ENCODE measurements at regions of chr3 and their contacts with region 1.

Region 1: GRCh38 chr3:58217209-58217811 is 6.5 kb upstream of the DNASE1L3 start:
- DNase-seq: peak; percentile 41
- H3K4me3 Mint-ChIP-seq: no peak overlapping the region
- H3K27ac Mint-ChIP-seq: peak overlapping the region; percentile 46
- H3K4me1 Mint-ChIP-seq: peaks cover 37% of the 10 kb centered on the region
- H3K27me3 Mint-ChIP-seq: peaks cover 11% of the 10 kb centered on the region

Region 2: GRCh38 chr3:57852896-57853295 is 364.4 kb before region 1 on chr3:
- intact Hi-C with region 1: no loop called
- DNase-seq: no peak
- H3K4me3 Mint-ChIP-seq: no peak overlapping the region
- H3K27ac Mint-ChIP-seq: no peak overlapping the region
- H3K4me1 Mint-ChIP-seq: no peaks in the 10 kb centered on the region
- H3K27me3 Mint-ChIP-seq: no peaks in the 10 kb centered on the region

Region 3: DNA sequence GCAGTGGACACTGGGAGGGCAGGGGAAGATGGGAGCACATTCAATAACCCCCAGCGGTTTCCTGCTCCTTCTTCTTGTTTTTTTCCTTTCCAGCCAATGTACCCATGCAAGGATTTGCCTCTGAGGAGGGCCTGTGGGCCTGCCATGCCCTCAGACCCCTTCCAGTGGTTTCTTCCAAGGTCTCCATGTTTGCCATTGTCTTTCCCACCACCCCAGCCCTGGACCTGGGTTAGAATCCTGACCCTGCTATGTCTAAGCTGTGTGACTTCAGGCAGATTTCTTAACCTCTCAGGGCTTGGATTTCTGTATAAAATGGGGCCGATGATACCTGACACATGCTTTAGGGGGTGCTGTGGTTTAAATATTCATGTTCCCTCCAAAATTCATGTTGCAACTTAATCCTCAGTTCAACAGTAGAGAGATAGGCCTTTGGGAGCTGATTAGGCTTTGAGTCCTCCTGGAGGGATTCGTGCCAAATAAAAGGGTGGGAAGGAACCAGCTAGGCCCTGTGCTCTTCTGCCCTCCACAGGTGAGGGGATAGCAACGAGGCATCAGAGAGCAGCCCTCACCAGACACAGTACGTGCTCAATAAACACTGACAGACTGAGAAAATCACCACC is 255.4 kb before region 1 on chr3:
- intact Hi-C with region 1: loop called (anchors 1 kb)
- DNase-seq: no peak
- H3K4me3 Mint-ChIP-seq: no peak overlapping the region
- H3K27ac Mint-ChIP-seq: no peak overlapping the region
- H3K4me1 Mint-ChIP-seq: peaks cover 5% of the 10 kb centered on the region
- H3K27me3 Mint-ChIP-seq: no peaks in the 10 kb centered on the region

Region 4: GRCh38 chr3:58177747-58178527 is 39.4 kb before region 1 on chr3:
- intact Hi-C with region 1: loop called (anchors 2 kb)
- DNase-seq: peak; percentile 81
- H3K4me3 Mint-ChIP-seq: peak overlapping the region; percentile 73
- H3K27ac Mint-ChIP-seq: no peak overlapping the region
- H3K4me1 Mint-ChIP-seq: peaks cover 12% of the 10 kb centered on the region
- H3K27me3 Mint-ChIP-seq: peaks cover 8% of the 10 kb centered on the region

Region 5: GRCh38 chr3:58188173-58188564 is 29.1 kb before region 1 on chr3:
- intact Hi-C with region 1: loop called (anchors 1 kb)
- DNase-seq: no peak
- H3K4me3 Mint-ChIP-seq: no peak overlapping the region
- H3K27ac Mint-ChIP-seq: no peak overlapping the region
- H3K4me1 Mint-ChIP-seq: no peaks in the 10 kb centered on the region
- H3K27me3 Mint-ChIP-seq: no peaks in the 10 kb centered on the region

Region 6: GRCh38 chr3:58206406-58207011 is 10.8 kb before region 1 on chr3:
- intact Hi-C with region 1: loop called (anchors 1 kb)
- DNase-seq: no peak
- H3K4me3 Mint-ChIP-seq: no peak overlapping the region
- H3K27ac Mint-ChIP-seq: peak overlapping the region; percentile 20
- H3K4me1 Mint-ChIP-seq: peaks cover 20% of the 10 kb centered on the region
- H3K27me3 Mint-ChIP-seq: peaks cover 11% of the 10 kb centered on the region

Region 7: GRCh38 chr3:58237238-58237940 is 20.1 kb after region 1 on chr3 and contains the start of gene ABHD6:
- intact Hi-C with region 1: loop called (anchors 1 kb)
- DNase-seq: peak; percentile 78
- H3K4me3 Mint-ChIP-seq: peak within 1 kb of the TSS; percentile 90
- H3K27ac Mint-ChIP-seq: peak within 1 kb of the TSS; percentile 67
- H3K4me1 Mint-ChIP-seq: peaks cover 12% of the 10 kb centered on the region
- H3K27me3 Mint-ChIP-seq: peaks cover 32% of the 10 kb centered on the region
- total RNA-seq, gene ABHD6: 9.2 and 10.1 TPM in 2 replicates

Region 8: GRCh38 chr3:58288011-58288728 is 70.9 kb after region 1 on chr3:
- intact Hi-C with region 1: no loop called
- DNase-seq: no peak
- H3K4me3 Mint-ChIP-seq: no peak overlapping the region
- H3K27ac Mint-ChIP-seq: no peak overlapping the region
- H3K4me1 Mint-ChIP-seq: no peaks in the 10 kb centered on the region
- H3K27me3 Mint-ChIP-seq: no peaks in the 10 kb centered on the region

Region 9: GRCh38 chr3:58419780-58420507 is 202.6 kb after region 1 on chr3:
- intact Hi-C with region 1: no loop called
- DNase-seq: no peak
- H3K4me3 Mint-ChIP-seq: no peak overlapping the region
- H3K27ac Mint-ChIP-seq: peak overlapping the region; percentile 26
- H3K4me1 Mint-ChIP-seq: peaks cover 4% of the 10 kb centered on the region
- H3K27me3 Mint-ChIP-seq: no peaks in the 10 kb centered on the region

Measured in activated T-helper 1 cell treated with anti-CD3 and anti-CD28 coated beads, Interleukin-12 subunit alpha, Interleukin-12 subunit beta, Interleukin-2, Interleukin-4 antibody, amounts not matched to agents 30 ng/mL and 10 ng/mL and 1 ng/mL, durations not matched to agents 14 hours and 24 hours and 36 hours (primary cell).